ENCODE measurements at regions of chr5 and their contacts with region 1.

Region 1: DNA sequence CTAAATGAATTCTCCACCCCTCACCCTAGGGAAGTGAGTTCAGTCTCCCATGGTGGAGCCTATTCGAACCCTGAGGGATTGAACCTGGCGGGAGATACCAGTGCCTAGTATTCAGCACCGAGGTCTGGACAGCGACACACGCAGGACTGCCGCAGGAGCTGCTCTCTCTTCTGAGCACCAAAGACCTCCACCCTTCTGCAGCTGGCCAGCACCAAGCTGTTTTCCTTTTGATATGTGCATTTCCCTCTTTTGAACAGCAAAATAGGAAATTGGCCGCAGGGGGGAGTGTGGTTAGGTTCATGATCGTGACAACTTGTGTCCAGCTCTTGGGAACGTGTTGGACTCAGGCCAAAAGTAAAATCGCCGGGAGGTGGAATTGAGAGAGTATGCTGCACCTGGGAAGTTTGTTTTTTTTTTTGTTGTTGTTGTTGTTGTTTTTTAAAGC is 1.2 kb upstream of the PCSK1 start:
- DNase-seq: peak; percentile 89
- H3K4me3 ChIP-seq: no peak overlapping the region
- H3K27ac ChIP-seq: no peak overlapping the region
- H3K4me1 ChIP-seq: peaks cover 12% of the 10 kb centered on the region
- H3K27me3 ChIP-seq: peaks cover 18% of the 10 kb centered on the region
- CTCF ChIP-seq: 0 out of 2 replicates have a peak, but pooled peaks have one; percentile 18

Region 2: GRCh38 chr5:96483878-96484277 is 49.7 kb after region 1 on chr5:
- CTCF ChIA-PET with region 1: no interaction called
- POLR2A ChIA-PET with region 1: no interaction called
- intact Hi-C with region 1: loop called (anchors 5 kb)
- DNase-seq: peak; percentile 52
- H3K4me3 ChIP-seq: no peak overlapping the region
- H3K27ac ChIP-seq: no peak overlapping the region
- H3K4me1 ChIP-seq: peaks cover 25% of the 10 kb centered on the region
- H3K27me3 ChIP-seq: no peaks in the 10 kb centered on the region
- CTCF ChIP-seq: no peak

Region 3: GRCh38 chr5:96807075-96807654 is 372.9 kb after region 1 on chr5:
- CTCF ChIA-PET with region 1: no interaction called
- POLR2A ChIA-PET with region 1: interaction called, 10 read pairs
- intact Hi-C with region 1: no loop called
- DNase-seq: peak; percentile 71
- H3K4me3 ChIP-seq: peak overlapping the region; percentile 73
- H3K27ac ChIP-seq: peak overlapping the region; percentile 96
- H3K4me1 ChIP-seq: peaks cover 5% of the 10 kb centered on the region
- H3K27me3 ChIP-seq: no peaks in the 10 kb centered on the region
- CTCF ChIP-seq: no peak